ENCODE measurements at regions of chr11 and their contacts with region 1.

Region 1: GRCh38 chr11:60831143-60831500 is 10.8 kb upstream of the CCDC86 start:
- DNase-seq: peak; percentile 94
- H3K4me3 Mint-ChIP-seq: no peak overlapping the region
- H3K27ac Mint-ChIP-seq: no peak overlapping the region
- H3K4me1 Mint-ChIP-seq: peaks cover 12% of the 10 kb centered on the region
- H3K27me3 Mint-ChIP-seq: peaks cover 19% of the 10 kb centered on the region

Region 2: DNA sequence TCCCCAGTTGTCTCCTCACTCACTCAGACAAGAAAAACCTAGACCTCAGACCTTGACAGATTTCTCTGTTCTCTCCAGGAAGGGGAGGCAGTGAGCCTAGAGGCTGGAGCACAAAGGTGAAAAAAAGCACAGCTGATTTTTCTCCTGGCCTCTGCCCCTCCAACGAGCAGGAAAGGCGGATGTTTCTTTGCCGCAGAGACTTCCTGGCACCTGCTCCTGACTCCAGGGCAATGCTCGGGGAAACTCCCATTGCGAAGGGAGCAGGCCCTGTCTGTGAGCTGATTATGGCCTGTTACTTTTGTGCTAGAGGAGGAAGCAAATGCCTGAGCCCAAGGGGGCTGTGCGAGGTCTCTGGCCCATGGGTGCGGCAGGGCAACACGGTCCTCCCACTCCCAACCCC is 20.6 kb before region 1 on chr11:
- intact Hi-C with region 1: no loop called
- DNase-seq: no peak
- H3K4me3 Mint-ChIP-seq: no peak overlapping the region
- H3K27ac Mint-ChIP-seq: no peak overlapping the region
- H3K4me1 Mint-ChIP-seq: peaks cover 2% of the 10 kb centered on the region
- H3K27me3 Mint-ChIP-seq: no peaks in the 10 kb centered on the region

Region 3: DNA sequence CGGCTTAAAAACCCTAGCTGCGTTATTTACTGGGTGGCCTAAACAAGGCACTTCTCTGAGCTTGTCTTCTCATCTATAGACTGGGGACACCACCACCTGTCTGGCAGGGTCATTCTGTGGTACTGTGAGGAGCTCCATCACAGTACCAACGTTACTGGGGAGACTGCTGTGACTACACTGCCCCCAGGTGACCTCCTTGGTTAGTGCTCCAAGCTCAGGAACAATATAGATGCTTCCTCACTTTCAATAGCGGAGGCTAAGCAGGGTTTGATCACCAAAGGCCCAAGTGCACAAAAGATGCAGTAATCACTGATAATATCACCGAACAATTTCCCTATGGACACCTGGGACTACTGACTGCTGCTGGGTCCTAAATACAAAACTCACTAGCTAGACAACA is 56.4 kb after region 1 on chr11:
- intact Hi-C with region 1: loop called (anchors 1 kb)
- DNase-seq: peak; percentile 82
- H3K4me3 Mint-ChIP-seq: no peak overlapping the region
- H3K27ac Mint-ChIP-seq: no peak overlapping the region
- H3K4me1 Mint-ChIP-seq: peaks cover 5% of the 10 kb centered on the region
- H3K27me3 Mint-ChIP-seq: no peaks in the 10 kb centered on the region

Region 4: DNA sequence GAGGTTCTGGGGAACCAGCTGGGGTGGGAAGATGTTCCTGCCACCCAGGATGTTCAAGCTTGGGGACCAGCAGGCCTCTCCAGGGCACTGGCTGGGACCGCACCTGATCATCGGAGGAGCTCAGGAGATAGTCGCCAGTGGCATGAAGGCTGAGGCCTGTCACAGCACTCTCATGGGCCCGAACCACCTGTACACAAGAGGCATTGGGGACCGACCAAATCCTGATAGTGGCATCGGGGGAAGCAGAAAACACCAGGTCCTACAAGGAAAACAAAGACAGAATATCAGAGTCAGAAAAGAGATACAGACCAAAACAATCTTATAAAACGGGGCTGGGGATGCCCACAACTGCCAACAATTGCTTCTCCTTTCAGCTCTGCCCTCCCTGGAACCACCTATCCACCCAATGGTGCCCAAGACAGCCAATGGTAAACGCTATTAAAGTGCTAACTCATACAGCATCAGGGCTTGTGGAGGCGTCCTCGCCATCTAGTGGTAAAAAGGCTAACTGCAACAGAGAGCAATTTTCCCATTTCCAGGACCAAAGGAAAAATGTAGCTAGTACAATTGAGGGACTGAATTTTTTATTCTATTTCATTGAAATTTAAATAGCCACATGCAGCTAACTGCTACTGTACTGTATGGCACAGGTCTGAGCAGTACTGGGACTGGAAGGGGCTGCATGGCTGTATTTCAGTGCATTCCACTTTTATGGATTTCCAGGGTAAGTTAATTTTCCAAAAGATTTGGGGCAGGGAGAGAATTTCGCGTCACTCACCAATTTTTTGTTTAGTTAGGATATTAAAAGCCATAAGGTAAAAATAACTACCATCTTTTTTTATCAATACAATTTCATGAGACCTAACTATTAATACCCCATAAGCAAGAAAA is 68.2 kb after region 1 on chr11:
- intact Hi-C with region 1: loop called (anchors 1 kb)
- DNase-seq: peak; percentile 81
- H3K4me3 Mint-ChIP-seq: no peak overlapping the region
- H3K27ac Mint-ChIP-seq: peak overlapping the region; percentile 50
- H3K4me1 Mint-ChIP-seq: peaks cover 12% of the 10 kb centered on the region
- H3K27me3 Mint-ChIP-seq: no peaks in the 10 kb centered on the region

Region 5: DNA sequence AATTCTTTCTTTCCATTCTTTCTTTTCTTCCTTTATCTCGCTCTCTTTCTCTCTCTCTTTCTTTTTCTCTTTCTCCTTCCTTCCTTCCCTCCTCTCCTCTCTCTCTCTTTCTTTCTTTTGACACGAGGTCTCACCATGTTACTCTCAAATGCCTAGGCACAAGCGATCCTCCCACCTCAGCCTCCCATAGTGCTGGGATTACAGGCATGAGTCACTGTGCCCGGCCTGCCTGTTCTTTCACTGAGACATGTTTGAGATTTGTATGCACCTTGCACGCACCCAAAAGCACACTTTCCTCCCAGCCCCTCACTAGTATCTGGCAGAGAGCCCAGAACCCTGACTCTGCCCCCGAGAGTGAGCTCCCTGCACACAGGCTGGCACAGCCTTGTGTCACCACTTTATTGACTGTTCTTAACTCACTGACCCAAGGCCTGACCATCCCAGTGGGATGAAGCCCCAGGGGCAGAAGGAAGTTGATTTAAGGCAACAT is 197.2 kb after region 1 on chr11:
- intact Hi-C with region 1: loop called (anchors 10 kb)
- DNase-seq: peak; percentile 83
- H3K4me3 Mint-ChIP-seq: peak overlapping the region; percentile 88
- H3K27ac Mint-ChIP-seq: peak overlapping the region; percentile 97
- H3K4me1 Mint-ChIP-seq: peaks cover 77% of the 10 kb centered on the region
- H3K27me3 Mint-ChIP-seq: no peaks in the 10 kb centered on the region

Region 6: DNA sequence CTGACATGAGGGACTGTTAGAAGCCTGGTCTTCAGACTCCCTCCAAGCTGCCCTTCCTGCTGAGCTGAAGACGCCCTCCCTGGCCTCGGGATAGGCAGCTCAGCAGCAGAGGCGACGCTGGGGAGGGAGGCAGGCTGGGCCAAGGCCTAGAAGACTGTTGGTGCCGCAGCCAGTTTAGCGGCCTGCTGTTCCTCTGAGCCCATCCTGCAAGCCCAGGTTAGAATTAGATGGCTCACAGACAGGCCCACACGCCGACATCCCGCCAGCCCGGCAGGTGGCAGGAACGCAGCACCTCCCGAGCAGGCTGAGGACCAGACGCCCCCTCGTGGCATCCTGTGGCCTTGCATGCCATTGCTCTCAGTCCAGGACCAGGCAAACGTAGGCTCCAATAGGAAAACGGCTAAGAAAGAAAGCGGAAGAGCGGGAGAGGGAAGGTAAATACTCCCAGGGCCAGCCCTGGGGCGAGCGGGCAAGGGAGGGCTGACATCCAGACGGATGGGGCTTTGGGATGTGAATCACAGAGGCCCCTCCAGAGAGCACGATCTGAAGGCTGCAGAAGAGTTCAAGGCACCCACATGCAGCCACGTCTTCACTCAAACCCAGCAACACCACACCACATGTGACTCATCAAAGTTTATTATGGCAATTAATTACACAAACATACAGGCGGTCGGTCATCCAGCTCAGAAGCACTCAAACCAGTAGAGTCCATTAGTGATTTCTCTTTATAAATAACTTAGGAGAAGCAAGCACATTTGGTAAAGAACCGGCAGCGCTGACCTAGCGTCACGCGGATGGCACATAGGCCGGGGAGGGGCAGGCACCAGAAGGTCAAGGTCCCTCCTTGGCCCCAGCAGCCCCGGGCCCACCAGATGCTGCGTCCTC is 298.8 kb after region 1 on chr11:
- intact Hi-C with region 1: loop called (anchors 10 kb)
- DNase-seq: peak; percentile 97
- H3K4me3 Mint-ChIP-seq: peak overlapping the region; percentile 50
- H3K27ac Mint-ChIP-seq: peak overlapping the region; percentile 64
- H3K4me1 Mint-ChIP-seq: peaks cover 13% of the 10 kb centered on the region
- H3K27me3 Mint-ChIP-seq: no peaks in the 10 kb centered on the region

Region 7: GRCh38 chr11:61187505-61188130 is 356.5 kb after region 1 on chr11:
- intact Hi-C with region 1: loop called (anchors 1 kb)
- DNase-seq: peak; percentile 93
- H3K4me3 Mint-ChIP-seq: no peak overlapping the region
- H3K27ac Mint-ChIP-seq: no peak overlapping the region
- H3K4me1 Mint-ChIP-seq: peaks cover 2% of the 10 kb centered on the region
- H3K27me3 Mint-ChIP-seq: peaks cover 6% of the 10 kb centered on the region

Region 8: DNA sequence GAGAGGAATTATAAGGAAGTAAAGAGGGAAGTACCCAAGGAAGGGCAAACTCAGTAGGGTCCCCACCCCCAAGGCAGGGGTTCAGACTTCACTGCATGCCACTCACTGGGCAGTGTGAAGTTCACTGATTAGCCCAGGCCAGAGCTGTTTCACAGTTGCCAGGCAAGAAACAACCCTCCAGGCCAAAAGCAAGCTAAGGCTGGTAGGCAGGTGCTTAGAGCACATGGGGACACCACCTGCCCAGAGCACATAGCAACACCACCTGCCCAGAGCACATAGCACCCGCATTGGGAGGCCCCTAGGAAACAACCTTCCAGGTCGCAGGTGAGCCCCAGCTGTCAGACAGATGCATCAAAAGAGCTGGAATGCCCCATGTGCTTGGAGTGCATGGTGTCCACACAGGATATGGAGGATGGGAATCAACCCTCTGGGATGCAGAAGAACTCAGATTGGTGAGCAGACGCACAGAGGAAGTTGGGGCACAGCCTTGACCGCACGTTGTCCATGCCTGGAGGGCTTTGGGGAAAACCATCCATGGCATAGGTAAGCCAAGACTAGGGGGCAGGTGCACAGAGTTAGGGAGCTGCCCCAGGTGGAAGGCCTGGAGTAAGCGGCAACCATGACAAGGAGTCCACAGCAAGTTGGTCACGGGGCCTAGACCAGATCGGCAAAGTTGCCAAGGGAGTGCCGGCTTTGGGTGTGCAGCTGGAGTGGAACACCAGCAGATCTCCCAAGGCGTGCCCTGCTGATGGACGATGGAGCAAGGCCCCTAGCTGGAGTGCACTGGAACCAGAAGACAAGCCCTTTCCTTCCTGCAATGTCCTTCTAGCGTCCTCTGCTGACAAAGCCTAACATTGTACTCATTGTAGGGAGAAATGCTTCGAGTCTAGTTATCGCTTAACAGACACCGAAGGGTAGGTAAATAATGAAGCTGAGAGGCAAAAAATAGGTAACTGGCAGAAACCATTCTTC is 553.4 kb after region 1 on chr11:
- intact Hi-C with region 1: loop called (anchors 5 kb)
- DNase-seq: no peak
- H3K4me3 Mint-ChIP-seq: no peak overlapping the region
- H3K27ac Mint-ChIP-seq: no peak overlapping the region
- H3K4me1 Mint-ChIP-seq: peaks cover 6% of the 10 kb centered on the region
- H3K27me3 Mint-ChIP-seq: no peaks in the 10 kb centered on the region

Measured in activated CD4-positive, alpha-beta T cell treated with anti-CD3 and anti-CD28 coated beads, Interleukin-2, amount 10 ng/mL, durations not matched to agents 24 days and 14 days (primary cell).